ENCODE measurements at regions of chr11 and their contacts with region 1.

Region 1: DNA sequence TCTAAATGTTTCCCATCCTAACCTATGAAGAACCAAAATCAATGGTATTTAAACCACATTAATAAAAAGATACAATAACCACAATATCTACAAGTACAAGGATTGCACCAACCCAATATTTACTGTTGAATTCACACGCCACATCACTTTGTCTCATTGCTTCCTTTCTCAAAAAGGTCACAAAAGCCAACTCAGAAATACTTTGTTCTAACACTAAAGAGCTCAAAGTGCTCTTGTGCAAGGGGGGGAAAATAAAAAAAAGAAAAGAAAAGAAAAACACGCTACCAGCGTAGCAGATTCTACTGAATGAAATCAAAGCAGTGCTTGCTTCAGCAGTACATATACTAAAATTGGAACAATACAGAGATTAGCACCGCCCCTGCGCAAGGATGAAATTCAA is 10.5 kb upstream of the ARHGAP32 start:
- DNase-seq: no peak

Region 2: GRCh38 chr11:129291546-129291945 is 88.9 kb after region 1 on chr11:
- intact Hi-C with region 1: loop called in 1 of 2 experiments (anchors 5 kb)
- DNase-seq: no peak

Region 3: DNA sequence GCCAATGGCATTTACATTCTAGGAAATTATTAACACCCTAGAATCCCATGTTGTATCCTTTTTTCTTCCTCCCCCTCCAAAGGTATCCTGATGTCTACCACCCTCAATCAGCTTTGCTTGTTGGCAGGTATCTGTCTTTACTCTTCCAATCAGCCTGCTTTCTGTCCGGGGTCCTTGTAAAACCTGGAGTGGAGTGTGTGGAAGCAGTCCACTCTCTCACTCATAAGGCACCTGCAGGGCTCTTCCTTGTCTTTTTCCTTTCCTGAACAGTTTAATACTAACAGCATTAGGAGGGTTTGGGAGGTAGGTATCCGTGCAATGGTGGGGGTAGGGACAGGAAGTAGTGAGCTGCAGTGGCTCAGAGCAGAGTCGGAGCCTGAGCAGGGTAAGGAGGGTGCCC is 366.4 kb after region 1 on chr11:
- intact Hi-C with region 1: no loop called
- DNase-seq: no peak